ENCODE measurements at regions of chr6 and their contacts with region 1.

Region 1: GRCh38 chr6:166167801-166168615 is at the start of gene TBXT:
- DNase-seq: no peak
- H3K4me3 Mint-ChIP-seq: peak within 1 kb of the TSS; percentile 69
- H3K27ac Mint-ChIP-seq: peak within 1 kb of the TSS; percentile 15
- H3K4me1 Mint-ChIP-seq: peaks cover 5% of the 10 kb centered on the region
- H3K27me3 Mint-ChIP-seq: peaks cover 64% of the 10 kb centered on the region
- total RNA-seq, gene TBXT: not detected in 2 replicates

Region 2: DNA sequence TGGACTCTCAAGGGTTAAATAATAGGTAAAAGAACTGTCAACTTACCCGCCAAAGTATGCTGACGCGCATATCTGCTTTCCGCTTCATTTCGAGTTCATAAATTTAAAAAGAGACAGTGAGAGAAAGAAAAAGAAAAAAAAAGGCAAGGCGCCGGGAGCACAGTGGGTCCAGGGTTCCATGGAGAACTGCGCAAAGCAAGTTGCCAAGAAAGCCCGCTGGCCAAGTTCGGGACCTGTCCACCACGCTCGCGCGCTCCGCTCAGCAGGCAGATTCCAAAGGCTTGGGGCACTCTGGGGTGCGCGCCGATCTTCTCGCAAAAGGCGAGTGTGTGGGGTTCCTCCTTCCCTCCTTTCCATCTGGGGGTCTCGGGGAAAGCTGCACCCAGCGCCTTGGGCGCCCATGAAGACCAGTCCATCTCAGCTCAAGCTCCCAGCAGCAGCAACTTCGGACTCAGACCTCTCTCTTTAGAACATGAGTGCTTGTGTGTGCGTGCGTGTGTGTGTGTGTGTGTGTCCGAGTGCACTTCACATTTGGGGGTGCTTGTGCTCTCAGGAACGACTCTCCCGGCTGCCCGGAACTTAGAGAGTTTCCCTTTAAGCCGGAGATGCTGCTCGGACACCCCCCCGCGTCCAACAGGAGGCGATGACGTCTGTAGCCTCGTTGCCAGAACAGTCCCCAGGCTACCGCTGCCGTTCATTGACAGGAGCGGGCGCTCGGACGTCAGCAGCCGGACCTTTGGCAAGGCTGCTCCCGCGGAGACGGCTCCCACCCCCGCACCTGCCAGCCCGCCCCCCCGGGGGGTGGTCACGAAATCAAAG is 180.3 kb before region 1 on chr6:
- intact Hi-C with region 1: loop called (anchors 5 kb)
- DNase-seq: no peak
- H3K4me3 Mint-ChIP-seq: no peak overlapping the region
- H3K27ac Mint-ChIP-seq: no peak overlapping the region
- H3K4me1 Mint-ChIP-seq: peaks cover 2% of the 10 kb centered on the region
- H3K27me3 Mint-ChIP-seq: peaks cover 52% of the 10 kb centered on the region

Region 3: DNA sequence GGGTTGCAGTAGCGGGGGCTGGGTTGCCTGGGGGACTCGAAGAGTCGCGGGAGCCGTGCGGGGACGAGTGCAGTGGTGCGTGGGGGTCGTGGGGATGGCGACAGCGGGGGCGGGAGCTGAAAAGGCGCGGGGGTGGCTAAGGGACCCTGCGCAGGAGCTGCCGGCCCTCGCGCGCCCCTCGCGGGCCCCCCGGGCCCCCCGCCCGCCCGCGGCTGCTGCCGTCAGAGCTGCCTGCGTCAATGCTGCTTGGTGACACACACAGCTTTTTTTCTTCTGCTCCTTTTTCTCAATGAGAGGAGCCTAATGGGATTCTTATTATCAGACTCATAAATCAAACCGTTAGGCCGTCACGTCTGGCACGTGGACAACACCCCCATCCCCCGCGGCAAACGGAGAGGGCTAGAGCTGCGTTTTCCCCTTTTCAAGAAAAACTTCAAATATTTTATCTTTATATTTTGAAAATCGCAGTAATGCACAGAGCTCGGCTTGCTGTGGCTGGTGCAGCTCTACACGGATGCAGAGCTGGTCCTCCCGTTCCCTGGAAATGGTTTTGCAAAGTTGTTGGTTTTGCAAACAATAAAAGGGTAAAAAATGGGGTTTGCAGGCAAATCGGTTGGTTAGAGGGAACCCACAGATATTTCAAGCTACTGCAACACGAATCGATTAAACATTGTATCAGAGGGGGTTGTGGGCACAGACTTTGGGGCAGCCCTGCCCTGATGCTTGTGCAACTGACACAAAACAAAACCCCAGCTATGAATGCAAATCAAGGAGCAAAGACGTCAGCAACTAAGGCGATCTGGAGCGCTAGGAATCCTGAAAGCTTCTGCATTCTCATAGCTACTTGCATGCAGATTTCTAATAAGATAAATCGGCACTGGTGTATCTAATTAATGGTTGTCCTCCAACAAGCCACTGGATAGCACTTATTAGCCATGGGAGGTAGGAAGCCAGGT is 161.8 kb before region 1 on chr6:
- intact Hi-C with region 1: loop called (anchors 5 kb)
- DNase-seq: peak; percentile 35
- H3K4me3 Mint-ChIP-seq: no peak overlapping the region
- H3K27ac Mint-ChIP-seq: no peak overlapping the region
- H3K4me1 Mint-ChIP-seq: no peaks in the 10 kb centered on the region
- H3K27me3 Mint-ChIP-seq: peaks cover 53% of the 10 kb centered on the region

Region 4: GRCh38 chr6:166127624-166128472 is 40.2 kb before region 1 on chr6:
- intact Hi-C with region 1: no loop called
- DNase-seq: no peak
- H3K4me3 Mint-ChIP-seq: no peak overlapping the region
- H3K27ac Mint-ChIP-seq: no peak overlapping the region
- H3K4me1 Mint-ChIP-seq: no peaks in the 10 kb centered on the region
- H3K27me3 Mint-ChIP-seq: peaks cover 19% of the 10 kb centered on the region